HCT116 (cell line): ENCODE measurements at regions of chr9 and their contacts with region 1.

Region 1: DNA sequence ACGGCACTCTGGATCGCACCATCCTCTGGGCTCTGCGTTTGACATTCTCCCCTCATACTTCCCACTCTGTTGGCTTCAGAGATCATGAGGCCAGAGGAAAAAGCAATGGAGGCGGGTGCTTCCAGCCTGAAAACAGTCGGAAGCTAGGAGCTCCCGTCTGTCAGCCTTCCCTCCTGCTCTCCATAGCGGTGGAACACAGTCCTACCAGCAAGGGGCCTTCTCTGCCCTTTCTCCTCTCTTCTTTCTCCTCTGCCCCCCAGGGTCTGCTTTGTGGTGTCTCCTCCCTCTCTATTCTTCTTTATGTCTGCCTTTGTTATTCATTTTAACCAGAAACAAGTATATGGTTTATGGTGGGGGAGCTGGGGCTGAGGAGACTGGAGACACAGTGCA is 152.5 kb upstream of the NFIB start:
- DNase-seq: no peak
- ATAC-seq: no peak
- H3K4me3 ChIP-seq: no peak overlapping the region
- H3K27ac ChIP-seq: no peak overlapping the region
- H3K4me1 ChIP-seq: no peaks in the 10 kb centered on the region
- H3K27me3 ChIP-seq: peaks cover 41% of the 10 kb centered on the region; the same call in 1 of the 2 replicates
- CTCF ChIP-seq: no peak
- POLR2A ChIP-seq: no peak
- RAD21 ChIP-seq: no peak

Region 2: GRCh38 chr9:14645648-14646047 is 179.2 kb after region 1 on chr9:
- CTCF ChIA-PET with region 1: no interaction called
- POLR2A ChIA-PET with region 1: no interaction called
- RAD21 ChIA-PET with region 1: no interaction called
- intact Hi-C with region 1: loop called (anchors 10 kb)
- DNase-seq: no peak
- ATAC-seq: no peak
- H3K4me3 ChIP-seq: no peak overlapping the region
- H3K27ac ChIP-seq: no peak overlapping the region
- H3K4me1 ChIP-seq: no peaks in the 10 kb centered on the region
- H3K27me3 ChIP-seq: no peaks in the 10 kb centered on the region
- CTCF ChIP-seq: no peak
- POLR2A ChIP-seq: no peak
- RAD21 ChIP-seq: no peak

Region 3: GRCh38 chr9:14661421-14662059 is 195.1 kb after region 1 on chr9:
- CTCF ChIA-PET with region 1: interaction called, 7 read pairs
- POLR2A ChIA-PET with region 1: no interaction called
- RAD21 ChIA-PET with region 1: interaction called in 1 of 2 experiments, 3 read pairs
- intact Hi-C with region 1: loop called (anchors 5 kb)
- DNase-seq: no peak
- ATAC-seq: peak; percentile 55
- H3K4me3 ChIP-seq: no peak overlapping the region
- H3K27ac ChIP-seq: no peak overlapping the region
- H3K4me1 ChIP-seq: no peaks in the 10 kb centered on the region
- H3K27me3 ChIP-seq: no peaks in the 10 kb centered on the region
- CTCF ChIP-seq: peak; percentile 18 to 70 (median 52); a peak in 5 of 6 replicates
- POLR2A ChIP-seq: no peak
- RAD21 ChIP-seq: peak; percentile 35; the same call in 1 of the 2 replicates

Region 4: GRCh38 chr9:14838701-14839100 is 372.3 kb after region 1 on chr9:
- CTCF ChIA-PET with region 1: no interaction called
- POLR2A ChIA-PET with region 1: no interaction called
- RAD21 ChIA-PET with region 1: no interaction called
- intact Hi-C with region 1: loop called (anchors 5 kb)
- DNase-seq: no peak
- ATAC-seq: no peak
- H3K4me3 ChIP-seq: no peak overlapping the region
- H3K27ac ChIP-seq: no peak overlapping the region
- H3K4me1 ChIP-seq: no peaks in the 10 kb centered on the region
- H3K27me3 ChIP-seq: peaks cover 19% of the 10 kb centered on the region
- CTCF ChIP-seq: no peak
- POLR2A ChIP-seq: no peak
- RAD21 ChIP-seq: no peak